ENCODE measurements at regions of chr15 and their contacts with region 1.

Region 1: GRCh38 chr15:69160141-69160993 is at the start of gene GLCE:
- DNase-seq: peak; percentile 98
- ATAC-seq: peak; percentile 99
- total RNA-seq, gene GLCE: 8.4 TPM

Region 2: GRCh38 chr15:69225355-69226025 is 65.1 kb after region 1 on chr15:
- intact Hi-C with region 1: loop called (anchors 10 kb)
- DNase-seq: no peak
- ATAC-seq: peak; percentile 35

Region 3: DNA sequence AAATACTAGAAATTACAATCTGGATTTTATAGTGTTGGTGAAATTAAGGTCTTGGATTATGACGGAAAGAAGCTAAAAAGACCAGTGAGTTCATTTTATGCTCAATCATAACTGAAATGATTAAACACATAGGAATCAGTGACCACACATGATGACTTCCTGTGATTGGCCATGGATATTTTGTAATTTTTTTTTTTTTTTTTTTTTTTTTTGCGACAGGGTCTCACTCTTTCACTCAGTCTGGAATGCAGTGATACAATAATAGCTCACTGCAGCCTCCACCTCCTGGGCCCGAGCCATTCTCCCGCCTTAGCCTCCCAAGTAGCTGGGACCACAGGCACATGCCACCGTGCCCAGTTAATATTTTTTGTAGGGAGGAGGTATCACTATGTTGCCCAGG is 185.7 kb after region 1 on chr15:
- intact Hi-C with region 1: no loop called
- DNase-seq: no peak
- ATAC-seq: no peak

Measured in left ventricle myocardium superior (tissue), 1 donor.